GM12878 (cell line): ENCODE measurements at regions of chr3 and their contacts with region 1.

Region 1: GRCh38 chr3:192816351-192816750 is 89.0 kb upstream of the FGF12 start:
- DNase-seq: no peak
- ATAC-seq: 0 out of 3 replicates have a peak, but pooled peaks have one; percentile 7
- H3K4me3 ChIP-seq: no peak overlapping the region
- H3K27ac ChIP-seq: no peak overlapping the region
- H3K4me1 ChIP-seq: peaks cover 30% of the 10 kb centered on the region
- H3K27me3 ChIP-seq: no peaks in the 10 kb centered on the region
- CTCF ChIP-seq: peak; percentile 48 to 75 (median 61); a peak in 5 of 6 replicates
- EP300 ChIP-seq: no peak
- POLR2A ChIP-seq: no peak
- RAD21 ChIP-seq: peak; percentile 94

Region 2: DNA sequence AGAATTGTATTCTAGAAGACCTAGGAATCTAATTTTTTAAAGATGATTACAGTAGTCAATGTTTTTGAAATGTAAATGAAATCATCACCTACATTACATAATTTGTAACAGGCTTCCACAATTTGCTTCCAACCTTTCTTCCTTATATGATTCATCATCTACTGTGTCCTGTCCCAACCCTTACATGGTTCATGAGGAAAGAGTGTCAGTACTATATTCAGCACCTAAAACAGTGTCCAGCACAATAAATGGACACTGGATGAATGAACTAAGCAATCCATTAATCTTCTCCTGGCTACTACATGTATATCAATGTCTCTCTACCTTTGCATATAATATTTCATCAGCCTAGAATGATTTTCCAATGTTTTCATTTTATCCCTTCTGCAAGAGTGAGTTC is 101.2 kb before region 1 on chr3:
- CTCF ChIA-PET with region 1: no interaction called
- POLR2A ChIA-PET with region 1: no interaction called
- RAD21 ChIA-PET with region 1: no interaction called
- SMC1A ChIA-PET with region 1: no interaction called
- in situ Hi-C with region 1: no loop called
- intact Hi-C with region 1: no loop called
- DNase-seq: no peak
- ATAC-seq: no peak
- H3K4me3 ChIP-seq: no peak overlapping the region
- H3K27ac ChIP-seq: no peak overlapping the region
- H3K4me1 ChIP-seq: no peaks in the 10 kb centered on the region
- H3K27me3 ChIP-seq: no peaks in the 10 kb centered on the region
- CTCF ChIP-seq: no peak
- EP300 ChIP-seq: no peak
- POLR2A ChIP-seq: no peak
- RAD21 ChIP-seq: no peak

Region 3: DNA sequence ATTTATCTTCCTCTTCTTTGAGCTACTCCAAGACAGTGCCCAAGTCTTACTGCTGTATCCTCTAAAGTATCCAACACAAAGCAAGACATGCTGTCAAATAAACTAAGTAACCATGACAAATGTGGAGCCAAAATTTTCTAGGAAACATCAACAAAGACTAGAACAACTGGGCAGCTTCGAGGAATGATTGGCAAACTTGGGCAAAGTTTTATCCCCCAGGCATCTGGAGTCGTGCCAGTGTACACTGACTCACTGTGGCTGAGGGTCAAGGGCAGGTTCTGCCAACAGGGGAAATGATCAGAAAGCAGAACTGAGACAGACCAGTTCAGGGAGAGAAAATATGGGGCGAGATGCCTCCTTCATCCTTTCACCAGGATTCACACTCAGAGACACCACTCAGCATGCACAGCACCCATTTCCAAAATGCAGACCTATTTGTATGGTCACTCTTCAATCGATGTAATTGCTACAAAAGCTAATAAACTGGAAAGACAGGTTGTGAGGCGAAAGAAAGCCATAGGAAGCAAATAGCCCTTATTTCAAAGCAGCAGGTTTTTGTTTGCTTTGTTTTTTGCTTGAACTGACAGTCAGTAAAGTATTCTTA is 35.6 kb after region 1 on chr3:
- CTCF ChIA-PET with region 1: interaction called, 10 read pairs
- POLR2A ChIA-PET with region 1: interaction called, 8 read pairs
- RAD21 ChIA-PET with region 1: interaction called, 83 read pairs
- SMC1A ChIA-PET with region 1: interaction called, 82 read pairs
- in situ Hi-C with region 1: no loop called
- intact Hi-C with region 1: loop called (anchors 5 kb)
- DNase-seq: no peak
- ATAC-seq: peak; percentile 75
- H3K4me3 ChIP-seq: peak overlapping the region; percentile 18; the same call in 1 of the 2 replicates
- H3K27ac ChIP-seq: peak overlapping the region; percentile 81
- H3K4me1 ChIP-seq: peaks cover 58% of the 10 kb centered on the region
- H3K27me3 ChIP-seq: no peaks in the 10 kb centered on the region
- CTCF ChIP-seq: no peak
- EP300 ChIP-seq: peak in 1 of 2 experiments; percentile 63; a peak in 1 of 4 replicates
- POLR2A ChIP-seq: no peak
- RAD21 ChIP-seq: no peak

Region 4: GRCh38 chr3:192892981-192893700 is 76.8 kb after region 1 on chr3:
- CTCF ChIA-PET with region 1: interaction called, 24 read pairs
- POLR2A ChIA-PET with region 1: interaction called, 5 read pairs
- RAD21 ChIA-PET with region 1: interaction called, 80 read pairs
- SMC1A ChIA-PET with region 1: interaction called, 179 read pairs
- in situ Hi-C with region 1: no loop called
- intact Hi-C with region 1: loop called (anchors 1 kb)
- DNase-seq: peak; percentile 94
- ATAC-seq: peak; percentile 93
- H3K4me3 ChIP-seq: no peak overlapping the region; the same call in 1 of the 2 replicates
- H3K27ac ChIP-seq: peak overlapping the region; percentile 96
- H3K4me1 ChIP-seq: peaks cover 74% of the 10 kb centered on the region
- H3K27me3 ChIP-seq: no peaks in the 10 kb centered on the region
- CTCF ChIP-seq: no peak
- EP300 ChIP-seq: peak; percentile 98 to 99
- POLR2A ChIP-seq: peak; percentile 55
- RAD21 ChIP-seq: peak; percentile 25; the same call in 1 of the 2 replicates

Region 5: DNA sequence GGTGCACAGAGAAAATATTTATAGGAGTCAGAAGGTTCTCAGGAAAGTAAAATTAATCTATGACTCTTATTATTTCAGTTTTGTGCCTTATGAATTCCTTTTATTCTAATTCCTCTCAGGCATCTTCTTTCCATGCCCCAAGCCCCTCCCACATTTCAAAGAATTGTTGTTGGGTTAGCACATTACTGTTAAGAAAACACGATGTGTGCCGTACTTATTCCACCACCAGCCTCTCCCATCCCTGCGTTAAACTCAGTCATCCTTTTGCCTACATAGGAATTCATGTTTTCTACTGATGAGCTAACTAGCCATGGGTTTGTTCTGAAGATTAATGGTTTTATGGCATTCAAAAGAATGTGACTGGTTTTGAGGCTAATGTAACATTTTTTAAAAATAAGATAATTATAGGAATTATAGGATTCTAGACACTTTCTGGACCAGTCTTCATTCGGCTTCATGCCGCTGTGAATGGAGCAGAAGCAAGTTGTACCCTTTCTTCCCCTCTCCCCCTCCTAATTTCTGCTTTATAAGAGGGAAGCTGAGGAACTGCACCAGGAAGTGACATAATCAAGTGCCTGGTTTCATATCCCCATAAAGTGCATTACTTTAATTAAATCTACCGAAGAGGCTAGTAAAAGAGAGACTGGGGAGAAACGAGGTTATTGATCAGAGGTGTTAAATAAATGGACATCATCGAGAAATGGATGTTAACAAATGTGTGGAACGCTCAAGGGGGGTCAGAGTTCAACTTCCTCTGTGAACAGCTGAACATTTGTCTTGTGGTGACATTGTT is 113.6 kb after region 1 on chr3:
- CTCF ChIA-PET with region 1: interaction called, 440 read pairs
- POLR2A ChIA-PET with region 1: no interaction called
- RAD21 ChIA-PET with region 1: interaction called, 10 read pairs
- SMC1A ChIA-PET with region 1: interaction called, 472 read pairs
- in situ Hi-C with region 1: no loop called
- intact Hi-C with region 1: no loop called
- DNase-seq: no peak
- ATAC-seq: no peak; the same call in 2 of the 3 replicates
- H3K4me3 ChIP-seq: no peak overlapping the region
- H3K27ac ChIP-seq: no peak overlapping the region
- H3K4me1 ChIP-seq: no peaks in the 10 kb centered on the region
- H3K27me3 ChIP-seq: no peaks in the 10 kb centered on the region
- CTCF ChIP-seq: no peak
- EP300 ChIP-seq: no peak
- POLR2A ChIP-seq: no peak
- RAD21 ChIP-seq: no peak

Region 6: GRCh38 chr3:193040836-193041672 is 224.7 kb after region 1 on chr3:
- CTCF ChIA-PET with region 1: interaction called, 401 read pairs
- POLR2A ChIA-PET with region 1: interaction called, 8 read pairs
- RAD21 ChIA-PET with region 1: interaction called, 187 read pairs
- SMC1A ChIA-PET with region 1: interaction called, 309 read pairs
- in situ Hi-C with region 1: loop called (anchors 5 kb)
- intact Hi-C with region 1: loop called (anchors 1 kb)
- DNase-seq: peak; percentile 5
- ATAC-seq: peak; percentile 83
- H3K4me3 ChIP-seq: no peak overlapping the region
- H3K27ac ChIP-seq: no peak overlapping the region
- H3K4me1 ChIP-seq: no peaks in the 10 kb centered on the region
- H3K27me3 ChIP-seq: no peaks in the 10 kb centered on the region
- CTCF ChIP-seq: peak; percentile 22 to 56 (median 38); a peak in 5 of 6 replicates
- EP300 ChIP-seq: no peak
- POLR2A ChIP-seq: no peak
- RAD21 ChIP-seq: peak; percentile 84